Thyroid gland (tissue), 4 donors: ENCODE measurements at regions of chr2 and their contacts with region 1.

Region 1: DNA sequence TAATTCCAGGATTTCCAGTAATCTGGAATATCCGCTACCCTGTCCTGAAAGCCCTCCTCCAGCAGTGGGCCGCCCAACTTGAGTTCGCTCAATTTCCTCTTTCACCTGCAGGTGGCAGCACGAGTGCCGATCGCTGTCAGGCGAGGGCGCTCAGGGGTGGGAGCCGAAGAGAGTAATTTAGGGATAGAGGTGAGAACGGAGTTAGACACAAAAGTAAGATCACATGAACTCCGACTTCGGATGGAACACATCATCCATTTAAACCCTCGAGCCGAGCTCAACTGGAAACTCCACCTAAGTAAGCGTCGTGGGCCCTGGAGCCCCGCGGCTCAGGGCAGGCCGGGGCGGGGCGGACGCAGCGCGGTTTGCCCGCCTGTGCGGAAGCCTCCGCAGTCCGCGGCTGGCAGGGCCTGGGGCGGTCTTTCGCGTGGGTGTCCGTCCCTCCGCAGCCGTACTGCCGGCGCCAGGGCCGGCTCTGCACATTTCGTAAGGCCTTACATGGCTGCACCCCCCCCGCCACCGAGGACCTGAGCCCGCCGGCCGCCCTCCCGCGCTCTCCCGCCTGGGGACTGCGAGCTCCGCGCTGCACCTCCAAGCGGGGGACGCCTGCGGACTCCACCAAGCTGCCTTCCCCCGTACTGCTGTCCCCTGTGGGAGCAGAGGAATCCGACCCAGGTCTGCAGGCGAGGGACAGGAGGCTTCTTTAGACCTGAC is 61.2 kb downstream of the SEMA4F start:
- DNase-seq: peak; percentile 79 to 85
- H3K4me3 ChIP-seq: peak overlapping the region; percentile 5 to 39 (median 10)
- H3K27ac ChIP-seq: peak overlapping the region in 1 of 3 donors; percentile 14
- H3K4me1 ChIP-seq: no peaks in the 10 kb centered on the region
- H3K27me3 ChIP-seq: no peaks in the 10 kb centered on the region
- CTCF ChIP-seq: peak; percentile 69 to 91 (median 78)
- POLR2A ChIP-seq: no peak

Region 2: DNA sequence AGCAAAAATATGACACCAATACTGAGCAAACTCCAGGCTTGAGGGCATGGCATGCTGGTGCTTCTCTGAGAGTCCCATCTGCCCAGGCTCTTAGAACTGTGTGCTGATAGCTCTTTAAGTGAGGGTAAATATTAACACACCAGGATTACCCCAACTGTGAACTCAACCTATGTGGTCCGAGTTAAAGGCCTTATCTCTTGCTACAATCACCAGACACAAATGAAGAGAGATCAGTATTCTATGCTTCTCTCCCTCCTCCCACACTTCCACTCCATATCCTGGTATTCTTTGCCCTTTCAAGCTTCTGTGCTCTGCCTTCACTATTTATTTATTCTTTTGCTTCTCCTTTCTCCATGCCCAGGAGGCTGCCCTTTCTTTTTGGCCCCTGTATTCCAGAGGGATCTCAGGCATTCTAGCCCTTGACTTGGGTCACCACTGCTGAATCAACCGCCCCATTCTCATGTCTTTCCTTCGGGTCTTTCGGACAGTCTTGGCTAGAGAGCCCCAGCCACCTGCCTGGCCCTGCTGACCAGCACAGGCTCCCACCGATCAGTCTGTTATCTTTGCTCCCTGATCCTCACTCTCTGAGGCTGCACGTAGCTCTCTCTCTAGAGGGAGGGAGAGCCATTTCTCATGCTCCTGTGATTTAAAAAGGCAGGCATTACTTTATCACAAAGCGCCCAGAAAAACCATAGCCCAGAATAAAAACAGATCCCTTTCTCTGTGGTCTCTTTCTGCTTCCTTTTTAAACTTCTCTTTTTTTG is 101.5 kb after region 1 on chr2:
- intact Hi-C with region 1: no loop called
- DNase-seq: peak; percentile 34 to 40
- H3K4me3 ChIP-seq: no peak overlapping the region
- H3K27ac ChIP-seq: peak overlapping the region; percentile 58 to 91 (median 90)
- H3K4me1 ChIP-seq: peaks cover 27 to 54% of the 10 kb centered on the region in 2 donors
- H3K27me3 ChIP-seq: no peaks in the 10 kb centered on the region
- CTCF ChIP-seq: no peak
- POLR2A ChIP-seq: no peak

Region 3: DNA sequence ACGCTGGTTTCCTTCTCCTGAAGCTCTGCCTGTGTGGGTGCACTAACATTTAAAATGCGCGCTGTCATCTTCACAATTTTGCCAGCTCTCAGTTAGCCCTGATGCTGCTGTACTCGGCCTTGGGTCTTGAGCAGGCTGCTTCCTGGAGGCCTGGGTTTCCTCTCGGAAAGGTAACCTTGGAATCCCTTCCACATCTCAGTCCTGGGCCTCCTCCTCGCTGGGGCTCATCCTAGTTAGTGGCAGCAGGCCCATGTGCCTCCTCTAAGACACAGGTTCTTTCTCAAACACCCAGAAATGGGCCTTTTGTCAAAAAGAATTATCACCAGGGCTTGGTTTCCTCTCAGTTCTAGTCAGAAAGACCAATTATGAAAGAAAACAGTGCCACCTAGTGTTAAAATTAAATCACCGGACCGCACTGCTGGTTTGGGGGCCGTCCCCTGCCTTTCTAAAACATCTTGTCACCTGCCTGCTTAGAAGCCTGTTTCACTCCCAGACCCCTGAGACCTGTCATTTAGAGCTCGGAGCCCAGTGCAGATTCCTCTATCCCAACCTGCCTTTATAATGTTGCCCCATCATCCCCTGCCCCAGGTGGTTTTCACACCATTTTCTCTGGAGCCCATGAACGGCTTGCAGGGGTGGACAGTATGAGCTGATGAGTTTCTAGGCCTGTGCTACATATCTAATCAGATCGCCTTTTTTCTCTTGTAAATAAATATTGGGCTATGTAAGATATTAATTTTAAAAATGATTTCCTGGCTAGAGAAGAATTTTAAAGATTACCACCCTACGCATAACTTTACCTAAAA is 161.0 kb after region 1 on chr2:
- intact Hi-C with region 1: loop called (anchors 2 kb)
- DNase-seq: peak; percentile 11 to 13
- H3K4me3 ChIP-seq: no peak overlapping the region
- H3K27ac ChIP-seq: no peak overlapping the region
- H3K4me1 ChIP-seq: no peaks in the 10 kb centered on the region
- H3K27me3 ChIP-seq: no peaks in the 10 kb centered on the region
- CTCF ChIP-seq: peak; percentile 35 to 75 (median 61)
- POLR2A ChIP-seq: no peak